Aorta (tissue), 5 donors: ENCODE measurements at regions of chr14 and their contacts with region 1.

Region 1: DNA sequence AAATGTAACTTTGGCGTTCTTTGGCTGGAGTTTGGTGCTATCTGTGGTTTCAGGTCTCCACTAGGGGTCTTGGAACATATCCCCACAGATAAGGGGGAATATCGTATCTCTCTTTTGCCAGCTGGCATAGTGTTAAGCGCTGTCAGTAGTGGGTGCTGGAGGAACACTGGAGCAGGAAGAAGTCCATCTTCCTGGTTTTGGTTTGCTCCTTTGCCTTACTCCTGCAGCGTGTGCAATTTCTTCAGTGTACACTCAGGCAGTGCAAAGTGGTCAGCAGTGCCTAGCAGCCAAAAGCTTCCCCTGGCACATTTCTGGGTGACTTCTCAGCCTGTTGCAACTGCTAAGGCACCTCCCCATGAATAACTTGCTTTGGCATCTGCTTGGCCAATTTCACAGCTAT is 11.7 kb upstream of the RIPK3 start:
- DNase-seq: peak in 1 of 2 donors; percentile 54
- ATAC-seq: no peak
- H3K4me3 ChIP-seq: no peak overlapping the region
- H3K27ac ChIP-seq: no peak overlapping the region
- H3K4me1 ChIP-seq: no peaks in the 10 kb centered on the region
- H3K27me3 ChIP-seq: no peaks in the 10 kb centered on the region

Region 2: DNA sequence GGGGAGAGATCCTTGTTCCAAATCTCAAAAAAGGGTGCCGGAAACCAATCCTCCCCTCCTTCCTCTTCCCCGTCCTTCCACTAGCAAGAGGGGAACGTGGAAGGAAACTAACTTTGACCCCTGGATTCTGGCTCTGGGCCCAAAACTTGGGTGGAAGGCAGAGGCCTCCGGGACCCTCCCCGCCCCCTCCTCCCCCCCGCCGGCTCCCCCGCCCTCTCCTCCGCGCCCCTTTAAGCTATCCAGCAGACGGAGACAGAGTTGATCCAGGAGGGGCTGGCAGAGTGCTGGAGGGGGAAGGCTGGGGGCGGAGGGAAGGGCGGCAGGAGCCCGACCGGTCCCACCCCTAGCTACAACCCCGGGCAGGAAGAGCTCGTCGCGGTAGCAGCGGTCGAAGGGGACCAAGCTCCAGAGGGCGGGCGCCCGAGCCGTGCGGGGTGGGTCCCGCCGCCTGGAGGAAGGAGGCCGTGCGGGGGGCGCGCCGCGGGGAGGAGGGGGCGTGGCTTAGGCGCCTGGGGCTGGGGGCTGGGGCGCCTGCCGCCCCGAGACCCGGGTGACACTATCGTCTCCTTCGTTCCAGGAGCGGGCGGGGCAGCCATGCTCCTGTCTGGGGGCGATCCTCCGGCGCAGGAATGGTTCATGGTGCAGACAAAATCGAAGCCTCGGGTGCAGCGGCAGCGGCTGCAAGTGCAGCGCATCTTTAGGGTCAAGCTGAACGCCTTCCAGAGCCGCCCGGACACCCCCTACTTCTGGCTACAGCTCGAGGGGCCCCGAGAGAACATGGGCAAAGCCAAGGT is 47.3 kb after region 1 on chr14 and contains the start of gene NYNRIN:
- intact Hi-C with region 1: loop called in 1 of 2 experiments (anchors 1 kb)
- DNase-seq: peak; percentile 76 to 84
- ATAC-seq: peak; percentile 79
- H3K4me3 ChIP-seq: peak within 1 kb of the TSS; percentile 58 to 93
- H3K27ac ChIP-seq: no peak within 1 kb of the TSS
- H3K4me1 ChIP-seq: no peaks in the 10 kb centered on the region
- H3K27me3 ChIP-seq: no peaks in the 10 kb centered on the region
- total RNA-seq, gene NYNRIN: 11.2 to 31.6 TPM